ENCODE measurements at regions of chr7 and their contacts with region 1.

Region 1: DNA sequence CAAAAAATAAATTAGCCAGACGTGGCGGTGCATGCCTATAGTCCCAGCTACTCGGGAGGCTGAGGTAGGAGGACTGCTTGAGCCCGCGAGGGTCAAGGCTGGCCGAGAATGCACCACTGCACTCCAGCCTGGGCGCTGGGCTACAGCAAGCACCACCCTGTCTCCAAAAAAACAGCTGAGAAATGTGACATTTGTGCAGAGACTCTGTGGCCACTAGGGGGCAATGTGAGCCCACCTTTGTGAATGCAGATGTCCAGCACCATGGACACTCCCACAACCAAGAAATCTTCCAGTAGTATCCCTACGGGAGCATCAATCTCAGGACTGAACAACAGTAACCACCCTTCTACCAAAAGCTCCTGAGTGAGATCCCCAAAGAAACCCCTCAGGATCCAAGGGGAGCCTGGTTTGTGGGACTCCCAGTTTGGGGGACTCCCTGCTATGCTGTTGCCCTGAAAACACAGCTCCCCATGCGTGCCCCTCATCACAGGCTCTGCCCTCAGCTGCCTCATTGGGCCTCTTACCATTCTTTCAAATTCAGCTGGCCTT is 6.2 kb upstream of the AHCYL2 start:
- DNase-seq: peak; percentile 91
- H3K4me3 Mint-ChIP-seq: no peak overlapping the region
- H3K27ac Mint-ChIP-seq: no peak overlapping the region
- H3K4me1 Mint-ChIP-seq: no peaks in the 10 kb centered on the region
- H3K27me3 Mint-ChIP-seq: no peaks in the 10 kb centered on the region
- CTCF ChIP-seq: peak; percentile 85

Region 2: GRCh38 chr7:128904381-128905197 is 314.0 kb before region 1 on chr7:
- CTCF ChIA-PET with region 1: no interaction called
- POLR2A ChIA-PET with region 1: no interaction called
- intact Hi-C with region 1: loop called (anchors 10 kb)
- DNase-seq: peak; percentile 71
- H3K4me3 Mint-ChIP-seq: no peak overlapping the region
- H3K27ac Mint-ChIP-seq: no peak overlapping the region
- H3K4me1 Mint-ChIP-seq: peaks cover 9% of the 10 kb centered on the region
- H3K27me3 Mint-ChIP-seq: peaks cover 12% of the 10 kb centered on the region
- CTCF ChIP-seq: peak; percentile 59

Region 3: DNA sequence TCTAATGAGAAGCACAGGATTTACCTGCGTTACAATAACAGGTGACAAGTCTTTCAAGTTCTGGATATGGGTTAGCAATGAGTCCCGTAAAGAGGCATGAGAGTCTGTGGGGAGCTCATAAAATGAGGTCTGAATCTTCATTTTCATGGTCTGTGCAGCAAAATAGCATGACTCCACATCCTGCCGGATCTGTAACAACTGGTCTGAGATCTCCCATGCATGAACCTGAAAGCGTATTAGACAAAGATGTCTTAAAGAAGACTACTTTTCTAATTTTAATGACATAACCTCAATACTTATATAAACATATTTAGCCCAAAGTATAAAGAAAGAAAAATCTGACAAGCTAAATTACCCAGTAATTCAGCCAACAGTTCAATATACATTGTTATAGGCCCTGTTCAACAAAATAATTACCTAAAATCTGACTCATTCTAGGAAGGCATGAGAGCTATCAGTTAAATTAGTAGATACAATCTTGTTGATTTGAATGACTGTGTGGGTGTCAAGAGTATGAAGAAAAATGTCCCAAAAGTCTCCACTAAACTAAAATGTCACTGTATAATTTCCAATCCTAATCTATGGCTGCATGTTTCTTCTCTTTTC is 200.6 kb before region 1 on chr7:
- CTCF ChIA-PET with region 1: no interaction called
- POLR2A ChIA-PET with region 1: no interaction called
- intact Hi-C with region 1: no loop called
- DNase-seq: no peak
- H3K4me3 Mint-ChIP-seq: no peak overlapping the region
- H3K27ac Mint-ChIP-seq: peak overlapping the region; percentile 42
- H3K4me1 Mint-ChIP-seq: peaks cover 6% of the 10 kb centered on the region
- H3K27me3 Mint-ChIP-seq: no peaks in the 10 kb centered on the region
- CTCF ChIP-seq: no peak

Region 4: GRCh38 chr7:129271500-129272355 is 53.1 kb after region 1 on chr7:
- CTCF ChIA-PET with region 1: interaction called, 63 read pairs
- POLR2A ChIA-PET with region 1: no interaction called
- intact Hi-C with region 1: loop called (anchors 1 kb)
- DNase-seq: peak; percentile 66
- H3K4me3 Mint-ChIP-seq: no peak overlapping the region
- H3K27ac Mint-ChIP-seq: no peak overlapping the region
- H3K4me1 Mint-ChIP-seq: peaks cover 5% of the 10 kb centered on the region
- H3K27me3 Mint-ChIP-seq: no peaks in the 10 kb centered on the region
- CTCF ChIP-seq: peak; percentile 52

Region 5: DNA sequence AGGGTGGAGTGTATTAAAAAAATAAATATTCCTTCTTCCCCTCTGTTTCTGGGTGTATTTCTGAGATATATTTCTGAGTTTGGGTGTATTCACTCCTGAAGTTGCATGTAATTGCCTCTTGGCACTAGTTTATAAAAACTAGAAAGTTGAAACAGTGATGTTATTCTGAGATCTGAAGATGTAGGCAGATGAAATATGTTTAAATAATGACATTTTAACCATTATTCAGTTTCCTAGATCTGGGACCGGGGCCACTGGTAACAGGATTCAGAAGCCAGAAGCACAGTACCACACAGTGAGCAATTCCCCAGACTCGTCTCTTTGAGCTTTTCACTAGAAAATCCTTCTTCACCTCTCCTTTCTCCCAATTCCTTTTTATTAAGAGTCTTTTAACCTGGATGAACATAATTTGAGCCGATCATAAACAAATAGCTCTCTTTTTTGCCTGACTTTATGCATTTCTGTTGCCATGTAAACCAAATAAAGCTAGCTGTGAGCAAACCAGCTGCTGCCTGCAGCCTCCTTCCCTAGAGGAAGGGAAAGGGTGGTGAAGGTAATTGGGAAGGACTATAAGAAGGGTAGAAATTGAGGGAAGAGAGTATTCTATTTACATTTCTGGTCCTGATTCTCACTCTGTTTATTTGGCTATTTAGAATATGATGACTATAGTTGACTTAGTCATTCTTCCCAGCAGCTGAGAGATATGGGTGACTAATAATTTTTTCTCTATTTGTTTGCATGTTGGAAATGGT is 113.9 kb after region 1 on chr7:
- CTCF ChIA-PET with region 1: interaction called, 11 read pairs
- POLR2A ChIA-PET with region 1: interaction called, 4 read pairs
- intact Hi-C with region 1: no loop called
- DNase-seq: peak; percentile 21
- H3K4me3 Mint-ChIP-seq: no peak overlapping the region
- H3K27ac Mint-ChIP-seq: no peak overlapping the region
- H3K4me1 Mint-ChIP-seq: peaks cover 7% of the 10 kb centered on the region
- H3K27me3 Mint-ChIP-seq: no peaks in the 10 kb centered on the region
- CTCF ChIP-seq: no peak

Region 6: DNA sequence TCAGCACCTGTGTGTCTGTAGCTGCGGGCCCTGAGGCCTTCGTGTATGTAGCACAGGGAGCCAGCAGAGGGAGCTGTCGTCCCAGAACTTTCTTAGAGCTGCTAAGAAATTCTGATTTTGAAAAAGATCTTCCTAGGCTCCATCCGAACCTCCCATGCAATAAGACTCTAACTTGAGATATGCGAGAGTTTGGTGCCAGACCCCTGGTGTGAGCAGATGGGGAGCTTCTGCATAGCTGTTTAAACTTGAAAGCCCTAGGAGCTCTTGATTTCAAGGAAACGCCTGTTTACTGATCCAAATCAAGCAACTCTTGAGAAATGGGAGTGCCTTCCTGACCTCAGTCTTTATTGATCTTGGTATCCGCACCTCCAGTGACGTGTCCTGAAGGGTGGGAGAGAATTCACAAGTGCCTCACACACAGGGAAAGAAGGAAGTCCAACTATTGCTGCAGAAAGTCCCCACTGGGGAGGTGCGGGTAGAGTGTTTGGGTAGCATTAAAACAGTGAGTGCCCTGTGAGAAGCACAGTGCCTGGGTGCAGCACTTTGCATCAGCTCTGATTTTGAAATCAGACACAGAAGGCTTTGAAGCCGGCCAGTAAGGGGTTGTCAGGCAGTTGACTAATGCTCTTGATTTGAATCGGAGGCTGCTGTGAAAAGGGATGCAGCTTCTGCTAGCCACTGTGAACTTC is 149.3 kb after region 1 on chr7:
- CTCF ChIA-PET with region 1: interaction called, 71 read pairs
- POLR2A ChIA-PET with region 1: no interaction called
- intact Hi-C with region 1: no loop called
- DNase-seq: peak; percentile 73
- H3K4me3 Mint-ChIP-seq: no peak overlapping the region
- H3K27ac Mint-ChIP-seq: no peak overlapping the region
- H3K4me1 Mint-ChIP-seq: no peaks in the 10 kb centered on the region
- H3K27me3 Mint-ChIP-seq: no peaks in the 10 kb centered on the region
- CTCF ChIP-seq: peak; percentile 86

Region 7: GRCh38 chr7:129635300-129636029 is 416.9 kb after region 1 on chr7:
- CTCF ChIA-PET with region 1: interaction called, 7 read pairs
- POLR2A ChIA-PET with region 1: no interaction called
- intact Hi-C with region 1: loop called (anchors 2 kb)
- DNase-seq: peak; percentile 80
- H3K4me3 Mint-ChIP-seq: no peak overlapping the region
- H3K27ac Mint-ChIP-seq: no peak overlapping the region
- H3K4me1 Mint-ChIP-seq: peaks cover 12% of the 10 kb centered on the region
- H3K27me3 Mint-ChIP-seq: no peaks in the 10 kb centered on the region
- CTCF ChIP-seq: peak; percentile 64